HCT116 (cell line): ENCODE measurements at regions of chr1 and their contacts with region 1.

Region 1: DNA sequence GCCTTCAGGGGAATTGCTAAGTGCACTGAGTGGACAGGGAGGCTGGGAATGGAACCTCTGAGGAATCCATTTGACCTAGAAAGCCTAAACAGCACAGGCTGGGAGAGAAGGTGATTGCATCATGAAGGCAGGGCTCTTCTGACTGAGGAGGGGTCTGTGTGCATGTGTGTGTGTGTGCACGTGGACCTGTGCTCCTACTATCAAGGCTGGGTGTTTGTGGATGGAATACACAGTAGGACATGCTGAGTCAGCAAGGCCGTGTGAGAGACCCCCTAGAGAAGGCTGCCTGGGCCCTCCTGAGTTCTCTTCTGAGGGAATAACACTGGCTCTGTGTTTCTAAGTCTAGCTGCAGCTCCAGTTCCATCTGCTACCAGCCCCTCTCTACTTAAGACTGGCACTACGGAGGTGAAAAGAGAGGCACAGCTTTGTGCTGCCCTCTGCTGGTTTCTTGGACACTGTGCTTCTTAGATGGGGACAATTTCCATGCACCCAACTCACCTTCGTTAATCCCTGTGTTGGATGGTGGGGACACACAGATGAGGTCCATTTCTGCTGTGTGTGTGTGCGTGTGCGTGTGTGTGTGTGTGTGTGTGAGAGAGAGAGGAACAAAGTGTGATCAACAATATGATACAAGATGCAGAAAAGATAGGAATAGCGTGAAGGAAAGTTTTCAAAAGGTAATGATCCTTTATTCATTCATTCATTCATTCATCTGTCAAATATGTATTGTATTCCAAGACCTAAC is 6.2 kb upstream of the EFCAB14 start:
- DNase-seq: peak; percentile 75
- ATAC-seq: peak; percentile 99
- H3K4me3 ChIP-seq: no peak overlapping the region
- H3K27ac ChIP-seq: no peak overlapping the region
- H3K4me1 ChIP-seq: peaks cover 0 to 6% of the 10 kb centered on the region in 2 experiments; a peak in 1 of 4 replicates
- H3K27me3 ChIP-seq: peaks cover 3% of the 10 kb centered on the region; the same call in 1 of the 2 replicates
- CTCF ChIP-seq: peak; percentile 84 to 89 (median 88)
- POLR2A ChIP-seq: no peak
- RAD21 ChIP-seq: peak; percentile 94

Region 2: DNA sequence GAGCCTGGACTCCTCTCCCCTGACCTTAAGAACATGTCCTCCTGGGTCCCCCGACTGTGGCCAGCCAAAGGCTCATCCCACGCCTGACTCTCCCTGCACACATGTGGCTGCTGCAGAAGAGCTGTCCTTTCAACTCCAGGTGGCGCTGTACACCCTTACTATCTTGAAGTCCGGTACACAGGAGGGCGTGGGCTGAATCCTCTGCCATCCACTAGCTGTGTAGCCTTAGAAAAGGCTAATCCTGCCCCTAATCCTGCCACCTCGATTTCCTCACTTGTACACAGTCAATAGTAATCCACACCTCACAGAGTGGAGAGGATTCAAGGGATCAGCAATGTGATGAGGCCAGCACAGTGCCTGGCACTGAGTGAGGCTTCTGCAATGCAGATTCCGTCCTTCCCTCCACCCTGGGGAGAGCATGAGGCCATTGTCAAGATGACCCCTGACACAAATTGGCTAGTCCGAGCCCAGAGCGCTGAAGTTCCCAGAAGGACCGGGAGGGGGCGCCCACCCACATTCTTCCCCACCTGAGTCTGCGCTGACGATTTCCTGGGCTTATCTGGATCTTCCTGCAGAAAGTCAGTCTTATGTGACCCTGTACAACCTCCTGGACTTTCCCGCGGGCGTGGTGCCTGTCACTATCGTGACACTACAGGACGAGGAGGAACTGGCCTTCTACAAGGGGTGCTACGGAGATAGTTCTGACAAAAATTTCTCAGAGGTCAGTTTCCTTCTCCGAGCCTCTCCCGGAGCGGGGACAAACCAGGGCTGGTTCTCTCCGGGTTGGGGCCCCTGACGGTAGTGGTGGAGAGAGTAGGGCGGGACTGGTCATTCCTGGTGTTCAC is 282.6 kb before region 1 on chr1:
- CTCF ChIA-PET with region 1: interaction called, 4 read pairs
- POLR2A ChIA-PET with region 1: no interaction called
- RAD21 ChIA-PET with region 1: no interaction called
- intact Hi-C with region 1: loop called (anchors 5 kb)
- DNase-seq: peak; percentile 96
- ATAC-seq: peak; percentile 88
- H3K4me3 ChIP-seq: peak overlapping the region; percentile 60 to 63
- H3K27ac ChIP-seq: peak overlapping the region; percentile 66
- H3K4me1 ChIP-seq: peaks cover 0 to 16% of the 10 kb centered on the region in 2 experiments; a peak in 2 of 4 replicates
- H3K27me3 ChIP-seq: no peaks in the 10 kb centered on the region
- CTCF ChIP-seq: peak; percentile 85 to 94 (median 91)
- POLR2A ChIP-seq: peak; percentile 61
- RAD21 ChIP-seq: peak; percentile 80

Region 3: GRCh38 chr1:46539972-46540371 is 185.2 kb before region 1 on chr1:
- CTCF ChIA-PET with region 1: no interaction called
- POLR2A ChIA-PET with region 1: no interaction called
- RAD21 ChIA-PET with region 1: no interaction called
- intact Hi-C with region 1: loop called (anchors 5 kb)
- DNase-seq: no peak
- ATAC-seq: peak; percentile 50
- H3K4me3 ChIP-seq: no peak overlapping the region
- H3K27ac ChIP-seq: no peak overlapping the region
- H3K4me1 ChIP-seq: peaks cover 2 to 15% of the 10 kb centered on the region in 2 experiments; a peak in 3 of 4 replicates
- H3K27me3 ChIP-seq: 0 out of 2 replicates have a peak, but pooled peaks cover 3% of the 10 kb centered on the region
- CTCF ChIP-seq: no peak
- POLR2A ChIP-seq: no peak
- RAD21 ChIP-seq: no peak

Region 4: DNA sequence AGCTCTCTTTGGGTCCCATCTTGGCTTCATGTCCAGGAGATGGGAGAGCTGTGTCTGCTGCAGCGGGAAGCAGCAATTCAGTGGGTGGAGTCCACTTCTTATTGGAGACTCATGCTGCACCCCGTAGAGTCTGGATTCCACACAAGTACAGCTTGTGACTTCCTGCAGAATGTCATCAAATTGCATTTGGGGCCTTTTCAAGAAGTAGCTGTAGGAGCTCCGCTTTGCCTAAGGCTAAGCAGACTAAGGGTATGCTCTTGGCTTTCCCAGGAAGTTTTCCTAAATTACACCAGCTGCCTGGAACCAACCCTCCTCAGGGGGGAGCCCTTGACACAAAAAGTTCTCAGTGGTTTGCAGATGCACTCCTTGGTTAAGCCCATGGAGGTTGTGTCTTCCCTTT is 102.8 kb before region 1 on chr1:
- CTCF ChIA-PET with region 1: interaction called, 5 read pairs
- POLR2A ChIA-PET with region 1: no interaction called
- RAD21 ChIA-PET with region 1: interaction called in 1 of 2 experiments, 4 read pairs
- intact Hi-C with region 1: loop called (anchors 1 kb)
- DNase-seq: no peak
- ATAC-seq: peak; percentile 89
- H3K4me3 ChIP-seq: no peak overlapping the region
- H3K27ac ChIP-seq: no peak overlapping the region
- H3K4me1 ChIP-seq: peaks cover 0 to 17% of the 10 kb centered on the region in 2 experiments; a peak in 3 of 4 replicates
- H3K27me3 ChIP-seq: no peaks in the 10 kb centered on the region
- CTCF ChIP-seq: peak; percentile 63 to 68 (median 64)
- POLR2A ChIP-seq: no peak
- RAD21 ChIP-seq: peak; percentile 81